ENCODE measurements at regions of chr3 and their contacts with region 1.

Region 1: DNA sequence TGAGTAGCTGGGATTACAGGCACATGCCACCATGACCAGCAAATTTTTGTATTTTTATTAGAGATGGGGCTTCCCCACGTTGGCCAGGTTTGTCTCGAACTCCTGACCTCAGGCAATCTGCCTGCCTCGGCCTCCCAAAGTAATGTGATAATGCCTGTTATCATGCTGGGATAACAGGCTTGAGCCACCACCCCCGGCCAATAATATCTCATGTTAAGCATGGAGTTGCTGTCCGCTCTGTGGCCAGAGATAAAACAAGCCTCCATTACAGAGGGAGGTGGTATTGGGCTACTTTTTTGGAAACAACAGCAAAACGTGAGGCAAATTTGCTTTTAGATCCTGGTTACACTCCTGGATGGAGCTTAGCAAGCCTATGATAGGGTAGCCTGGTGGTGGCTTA is 32.9 kb upstream of the ALG1L2 start:
- DNase-seq: no peak
- H3K4me3 ChIP-seq: no peak overlapping the region
- H3K27ac ChIP-seq: no peak overlapping the region
- H3K4me1 ChIP-seq: no peaks in the 10 kb centered on the region
- H3K27me3 ChIP-seq: no peaks in the 10 kb centered on the region
- CTCF ChIP-seq: no peak

Region 2: DNA sequence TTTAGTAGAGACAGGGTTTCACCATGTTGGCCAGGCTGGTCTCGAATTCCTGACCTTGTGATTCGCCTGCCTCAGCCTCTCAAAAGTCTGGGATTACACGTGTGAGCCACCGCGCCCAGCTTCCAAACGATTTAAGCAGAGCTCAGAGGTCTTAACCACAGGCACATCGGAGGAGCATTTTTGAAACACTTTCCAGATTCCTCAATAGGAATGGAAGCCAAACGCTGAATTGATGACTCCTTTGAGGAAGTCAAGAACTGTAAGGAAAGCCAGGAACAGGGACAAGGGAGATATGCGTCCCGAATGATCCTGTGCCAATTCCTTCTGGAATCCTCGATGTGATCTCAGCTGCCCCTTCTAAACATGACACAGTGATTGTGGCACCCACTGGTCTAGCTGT is 34.2 kb before region 1 on chr3:
- CTCF ChIA-PET with region 1: no interaction called
- POLR2A ChIA-PET with region 1: no interaction called
- intact Hi-C with region 1: no loop called
- DNase-seq: no peak
- H3K4me3 ChIP-seq: no peak overlapping the region
- H3K27ac ChIP-seq: no peak overlapping the region
- H3K4me1 ChIP-seq: no peaks in the 10 kb centered on the region
- H3K27me3 ChIP-seq: peaks cover 3% of the 10 kb centered on the region
- CTCF ChIP-seq: no peak

Region 3: DNA sequence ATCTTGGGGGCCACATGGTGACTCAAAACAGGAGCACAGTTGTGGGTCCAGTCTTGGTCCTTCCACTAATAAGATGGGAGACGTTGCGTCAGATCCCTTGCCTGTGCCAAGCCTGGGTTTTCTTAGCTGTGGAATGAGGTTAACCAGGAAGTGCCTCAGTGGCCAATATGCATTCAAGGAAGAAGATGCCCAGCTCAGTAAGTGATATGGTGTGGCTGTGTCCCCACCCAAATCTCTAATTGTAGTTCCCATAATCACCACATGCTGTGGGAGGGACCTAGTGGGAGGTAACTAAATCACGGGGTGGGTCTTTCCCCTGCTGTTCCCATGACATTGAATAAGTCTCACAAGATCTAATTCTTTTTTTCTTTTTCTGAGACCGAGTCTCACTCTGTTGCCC is 39.3 kb after region 1 on chr3:
- CTCF ChIA-PET with region 1: no interaction called
- POLR2A ChIA-PET with region 1: no interaction called
- intact Hi-C with region 1: loop called (anchors 2 kb)
- DNase-seq: no peak
- H3K4me3 ChIP-seq: no peak overlapping the region
- H3K27ac ChIP-seq: no peak overlapping the region
- H3K4me1 ChIP-seq: no peaks in the 10 kb centered on the region
- H3K27me3 ChIP-seq: no peaks in the 10 kb centered on the region
- CTCF ChIP-seq: no peak